ENCODE measurements at regions of chr2 and their contacts with region 1.

Region 1: DNA sequence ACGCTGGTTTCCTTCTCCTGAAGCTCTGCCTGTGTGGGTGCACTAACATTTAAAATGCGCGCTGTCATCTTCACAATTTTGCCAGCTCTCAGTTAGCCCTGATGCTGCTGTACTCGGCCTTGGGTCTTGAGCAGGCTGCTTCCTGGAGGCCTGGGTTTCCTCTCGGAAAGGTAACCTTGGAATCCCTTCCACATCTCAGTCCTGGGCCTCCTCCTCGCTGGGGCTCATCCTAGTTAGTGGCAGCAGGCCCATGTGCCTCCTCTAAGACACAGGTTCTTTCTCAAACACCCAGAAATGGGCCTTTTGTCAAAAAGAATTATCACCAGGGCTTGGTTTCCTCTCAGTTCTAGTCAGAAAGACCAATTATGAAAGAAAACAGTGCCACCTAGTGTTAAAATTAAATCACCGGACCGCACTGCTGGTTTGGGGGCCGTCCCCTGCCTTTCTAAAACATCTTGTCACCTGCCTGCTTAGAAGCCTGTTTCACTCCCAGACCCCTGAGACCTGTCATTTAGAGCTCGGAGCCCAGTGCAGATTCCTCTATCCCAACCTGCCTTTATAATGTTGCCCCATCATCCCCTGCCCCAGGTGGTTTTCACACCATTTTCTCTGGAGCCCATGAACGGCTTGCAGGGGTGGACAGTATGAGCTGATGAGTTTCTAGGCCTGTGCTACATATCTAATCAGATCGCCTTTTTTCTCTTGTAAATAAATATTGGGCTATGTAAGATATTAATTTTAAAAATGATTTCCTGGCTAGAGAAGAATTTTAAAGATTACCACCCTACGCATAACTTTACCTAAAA is 42.4 kb downstream of the HK2 start:
- DNase-seq: peak; percentile 61 to 78 (median 74)
- H3K4me3 ChIP-seq: no peak overlapping the region
- H3K27ac ChIP-seq: peak overlapping the region in 1 of 2 experiments; percentile 8
- H3K4me1 ChIP-seq: peaks cover 4 to 14% (median 6%) of the 10 kb centered on the region in 4 experiments
- H3K27me3 ChIP-seq: no peaks in the 10 kb centered on the region

Region 2: DNA sequence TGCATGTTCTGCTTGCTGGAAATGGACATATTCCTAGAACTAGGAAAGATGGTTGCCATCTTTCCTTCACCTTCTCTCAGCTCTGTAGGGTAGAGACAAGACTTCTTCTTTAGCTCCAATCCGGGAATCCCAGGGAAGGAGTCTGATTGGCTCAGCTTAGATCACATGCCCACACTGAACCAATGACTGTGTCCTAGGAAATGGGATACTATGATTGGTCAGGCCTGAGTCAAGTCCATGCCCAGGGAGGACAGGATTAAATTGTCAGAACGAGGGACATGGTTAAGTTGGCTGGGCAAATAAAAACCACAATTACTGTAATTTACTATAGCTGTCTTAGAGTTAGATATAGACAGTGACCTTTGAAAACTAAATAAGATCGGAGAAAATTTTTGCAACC is 190.9 kb before region 1 on chr2:
- CTCF ChIA-PET with region 1: interaction called, 74 read pairs
- POLR2A ChIA-PET with region 1: no interaction called
- DNase-seq: no peak
- H3K4me3 ChIP-seq: no peak overlapping the region
- H3K27ac ChIP-seq: no peak overlapping the region
- H3K4me1 ChIP-seq: peaks cover 0 to 16% (median 11%) of the 10 kb centered on the region in 4 experiments
- H3K27me3 ChIP-seq: no peaks in the 10 kb centered on the region

Region 3: GRCh38 chr2:74708883-74709282 is 167.4 kb before region 1 on chr2:
- CTCF ChIA-PET with region 1: interaction called, 132 read pairs
- POLR2A ChIA-PET with region 1: no interaction called
- DNase-seq: peak; percentile 14 to 70 (median 53)
- H3K4me3 ChIP-seq: no peak overlapping the region
- H3K27ac ChIP-seq: no peak overlapping the region
- H3K4me1 ChIP-seq: peaks cover 0 to 14% (median 0%) of the 10 kb centered on the region in 4 experiments
- H3K27me3 ChIP-seq: no peaks in the 10 kb centered on the region

Region 4: GRCh38 chr2:74764429-74765272 is 111.6 kb before region 1 on chr2:
- CTCF ChIA-PET with region 1: interaction called, 75 read pairs
- POLR2A ChIA-PET with region 1: no interaction called
- DNase-seq: peak in 2 of 3 donors; percentile 52
- H3K4me3 ChIP-seq: no peak overlapping the region
- H3K27ac ChIP-seq: no peak overlapping the region
- H3K4me1 ChIP-seq: peaks cover 16 to 35% (median 17%) of the 10 kb centered on the region in 4 experiments
- H3K27me3 ChIP-seq: no peaks in the 10 kb centered on the region

Region 5: GRCh38 chr2:74845217-74846011 is 30.9 kb before region 1 on chr2:
- CTCF ChIA-PET with region 1: interaction called, 51 read pairs
- POLR2A ChIA-PET with region 1: no interaction called
- DNase-seq: peak in 2 of 3 donors; percentile 76 to 85
- H3K4me3 ChIP-seq: peak overlapping the region in 4 of 7 experiments; percentile 25 to 38 (median 32)
- H3K27ac ChIP-seq: peak overlapping the region; percentile 20 to 60
- H3K4me1 ChIP-seq: peaks cover 45 to 85% (median 76%) of the 10 kb centered on the region in 4 experiments
- H3K27me3 ChIP-seq: no peaks in the 10 kb centered on the region

Region 6: GRCh38 chr2:74886811-74887210 is 10.5 kb after region 1 on chr2:
- CTCF ChIA-PET with region 1: interaction called, 16 read pairs
- POLR2A ChIA-PET with region 1: no interaction called
- DNase-seq: no peak
- H3K4me3 ChIP-seq: no peak overlapping the region
- H3K27ac ChIP-seq: no peak overlapping the region
- H3K4me1 ChIP-seq: peaks cover 0 to 9% (median 2%) of the 10 kb centered on the region in 4 experiments
- H3K27me3 ChIP-seq: no peaks in the 10 kb centered on the region

Region 7: DNA sequence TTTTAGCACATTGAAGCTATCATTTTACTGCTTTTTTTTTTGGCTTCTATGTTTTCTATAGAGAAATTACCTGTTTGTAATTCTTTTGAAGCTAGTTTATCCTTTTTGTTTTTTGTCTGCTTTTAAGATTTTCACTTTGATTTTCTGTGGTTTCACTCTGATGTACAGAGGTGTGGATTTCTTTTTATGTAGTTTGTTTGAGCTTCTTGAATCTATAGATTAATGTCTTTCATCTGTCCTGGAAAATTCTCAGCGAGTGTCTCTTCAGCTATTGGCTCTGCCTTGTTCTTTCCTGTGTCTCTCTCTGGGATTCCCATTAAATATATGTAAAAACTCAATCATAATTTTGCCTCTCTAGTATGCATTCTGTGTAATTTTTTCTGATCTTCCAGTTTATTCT is 90.6 kb after region 1 on chr2:
- CTCF ChIA-PET with region 1: no interaction called
- POLR2A ChIA-PET with region 1: no interaction called
- DNase-seq: no peak
- H3K4me3 ChIP-seq: no peak overlapping the region
- H3K27ac ChIP-seq: no peak overlapping the region
- H3K4me1 ChIP-seq: no peaks in the 10 kb centered on the region
- H3K27me3 ChIP-seq: no peaks in the 10 kb centered on the region